GM10248 (cell line): ENCODE measurements at regions of chr10 and their contacts with region 1.

Region 1: GRCh38 chr10:129658376-129659074 is 191.5 kb downstream of the MGMT start:
- DNase-seq: no peak
- CTCF ChIP-seq: peak; percentile 35

Region 2: GRCh38 chr10:129605986-129606518 is 52.5 kb before region 1 on chr10:
- CTCF ChIA-PET with region 1: no interaction called
- POLR2A ChIA-PET with region 1: no interaction called
- DNase-seq: no peak
- CTCF ChIP-seq: no peak

Region 3: GRCh38 chr10:129646973-129647372 is 11.6 kb before region 1 on chr10:
- CTCF ChIA-PET with region 1: interaction called, 17 read pairs
- POLR2A ChIA-PET with region 1: no interaction called
- DNase-seq: no peak
- CTCF ChIP-seq: no peak

Region 4: GRCh38 chr10:129670124-129670523 is 11.6 kb after region 1 on chr10:
- CTCF ChIA-PET with region 1: interaction called, 10 read pairs
- POLR2A ChIA-PET with region 1: no interaction called
- DNase-seq: no peak
- CTCF ChIP-seq: no peak